ENCODE measurements at regions of chr2 and their contacts with region 1.

Region 1: DNA sequence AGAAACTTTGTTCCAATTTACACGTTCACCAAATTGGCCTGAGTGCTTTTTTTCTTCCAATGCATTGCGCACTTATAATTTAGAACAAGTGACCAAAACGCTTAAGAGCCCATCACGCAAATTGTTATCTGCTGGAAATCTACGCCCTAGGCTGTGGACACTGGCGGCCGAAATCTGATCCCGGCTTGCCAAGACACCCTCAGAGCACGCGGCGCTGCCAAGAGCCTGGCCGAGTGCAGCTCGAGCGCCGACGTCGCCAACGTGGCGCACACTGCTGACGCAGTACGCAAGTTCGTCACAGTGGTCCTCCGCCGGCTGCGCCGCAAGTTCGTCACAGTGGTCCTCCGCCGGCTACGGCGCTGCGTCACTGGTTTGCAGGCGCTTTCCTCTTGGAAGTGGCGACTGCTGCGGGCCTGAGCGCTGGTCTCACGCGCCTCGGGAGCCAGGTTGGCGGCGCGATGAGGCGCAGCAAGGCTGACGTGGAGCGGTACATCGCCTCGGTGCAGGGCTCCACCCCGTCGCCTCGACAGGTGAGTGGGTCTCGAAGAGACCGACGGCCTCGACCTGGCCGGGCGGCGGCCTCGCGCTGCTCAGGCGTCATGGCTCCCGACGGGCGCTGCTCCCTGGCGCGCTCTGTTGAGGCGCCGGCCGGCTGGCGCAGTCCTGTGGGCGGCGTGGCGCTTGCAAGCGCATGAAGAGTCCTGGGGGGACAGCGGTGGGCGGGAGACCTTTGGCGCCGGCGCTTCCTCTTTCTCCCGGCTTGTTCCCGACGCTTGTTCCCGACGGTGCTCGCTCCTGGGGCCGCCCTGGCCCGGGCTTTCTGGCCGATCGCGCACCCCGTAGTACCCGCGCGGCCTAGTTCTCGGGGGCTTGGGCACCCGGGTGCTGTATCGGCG is at the start of gene RANBP2:
- DNase-seq: peak; percentile 98
- H3K4me3 Mint-ChIP-seq: peak within 1 kb of the TSS; percentile 95
- H3K27ac Mint-ChIP-seq: peak within 1 kb of the TSS; percentile 99
- H3K4me1 Mint-ChIP-seq: peaks cover 13% of the 10 kb centered on the region
- H3K27me3 Mint-ChIP-seq: no peaks in the 10 kb centered on the region
- total RNA-seq, gene RANBP2: 74.9 and 77.0 TPM in 2 replicates

Region 2: GRCh38 chr2:108448678-108449493 is 270.5 kb before region 1 on chr2 and contains the start of gene GCC2:
- intact Hi-C with region 1: loop called (anchors 2 kb)
- DNase-seq: peak; percentile 99
- H3K4me3 Mint-ChIP-seq: peak within 1 kb of the TSS; percentile 100
- H3K27ac Mint-ChIP-seq: peak within 1 kb of the TSS; percentile 98
- H3K4me1 Mint-ChIP-seq: peaks cover 27% of the 10 kb centered on the region
- H3K27me3 Mint-ChIP-seq: no peaks in the 10 kb centered on the region
- total RNA-seq, gene GCC2: 38.1 and 43.4 TPM in 2 replicates

Region 3: GRCh38 chr2:108533832-108534583 is 185.4 kb before region 1 on chr2 and contains the start of gene LIMS1:
- intact Hi-C with region 1: loop called (anchors 1 kb)
- DNase-seq: peak; percentile 93
- H3K4me3 Mint-ChIP-seq: peak within 1 kb of the TSS; percentile 97
- H3K27ac Mint-ChIP-seq: peak within 1 kb of the TSS; percentile 98
- H3K4me1 Mint-ChIP-seq: peaks cover 40% of the 10 kb centered on the region
- H3K27me3 Mint-ChIP-seq: no peaks in the 10 kb centered on the region
- total RNA-seq, gene LIMS1: 63.1 and 66.0 TPM in 2 replicates

Region 4: GRCh38 chr2:108548208-108549003 is 171.0 kb before region 1 on chr2:
- intact Hi-C with region 1: no loop called
- DNase-seq: no peak
- H3K4me3 Mint-ChIP-seq: no peak overlapping the region
- H3K27ac Mint-ChIP-seq: no peak overlapping the region
- H3K4me1 Mint-ChIP-seq: peaks cover 6% of the 10 kb centered on the region
- H3K27me3 Mint-ChIP-seq: no peaks in the 10 kb centered on the region

Region 5: GRCh38 chr2:108594132-108594981 is 125.0 kb before region 1 on chr2:
- intact Hi-C with region 1: no loop called
- DNase-seq: peak; percentile 65
- H3K4me3 Mint-ChIP-seq: peak overlapping the region; percentile 83
- H3K27ac Mint-ChIP-seq: peak overlapping the region; percentile 92
- H3K4me1 Mint-ChIP-seq: peaks cover 52% of the 10 kb centered on the region
- H3K27me3 Mint-ChIP-seq: no peaks in the 10 kb centered on the region

Region 6: DNA sequence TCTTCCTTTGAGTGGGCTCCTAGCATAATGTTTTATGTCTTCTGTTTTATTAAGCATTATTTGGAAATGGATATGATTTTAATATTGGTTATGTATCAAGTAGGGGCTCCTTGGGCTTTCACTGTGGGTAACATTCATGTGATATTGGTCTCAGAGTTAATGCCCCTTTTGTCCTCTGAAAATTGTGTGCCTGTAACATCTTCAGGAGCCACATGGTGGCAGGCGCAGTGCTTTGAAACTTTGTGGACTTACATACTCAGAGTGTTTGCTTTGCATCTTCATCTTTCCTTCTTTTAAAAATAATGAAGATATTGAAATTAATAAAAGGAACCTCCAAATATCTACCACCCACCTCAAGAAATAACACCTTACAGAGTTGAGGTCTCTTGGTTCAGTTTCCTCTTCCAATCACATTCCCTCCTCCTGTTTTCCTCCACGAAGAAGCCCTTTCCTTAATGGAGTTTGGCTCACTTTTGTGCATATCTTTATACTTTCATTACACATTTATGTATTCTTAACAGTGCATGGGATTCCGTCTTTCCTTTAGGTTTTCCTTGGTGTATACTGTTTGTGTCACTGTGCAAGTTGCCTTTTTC is 111.6 kb before region 1 on chr2:
- intact Hi-C with region 1: loop called (anchors 5 kb)
- DNase-seq: peak; percentile 83
- H3K4me3 Mint-ChIP-seq: no peak overlapping the region
- H3K27ac Mint-ChIP-seq: no peak overlapping the region
- H3K4me1 Mint-ChIP-seq: peaks cover 65% of the 10 kb centered on the region
- H3K27me3 Mint-ChIP-seq: no peaks in the 10 kb centered on the region

Region 7: DNA sequence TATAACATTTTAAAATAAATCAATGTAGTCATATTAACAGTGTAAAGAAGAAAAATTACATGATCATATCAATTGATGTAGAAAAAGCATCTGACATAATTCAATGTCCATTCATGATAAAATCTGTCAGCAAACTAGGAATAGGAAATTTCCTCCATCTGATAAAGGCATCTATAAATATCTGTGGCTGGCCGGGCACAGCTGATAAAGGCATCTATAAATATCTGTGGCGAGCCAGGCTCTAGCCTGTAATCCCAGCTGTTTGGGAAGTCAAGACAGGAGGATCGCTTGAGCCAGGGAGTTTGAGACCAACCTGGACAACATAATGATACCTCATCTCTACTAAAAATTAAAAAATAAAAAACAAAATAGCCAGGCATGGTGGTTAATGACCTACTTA is 18.2 kb before region 1 on chr2:
- intact Hi-C with region 1: no loop called
- DNase-seq: no peak
- H3K4me3 Mint-ChIP-seq: no peak overlapping the region
- H3K27ac Mint-ChIP-seq: no peak overlapping the region
- H3K4me1 Mint-ChIP-seq: peaks cover 2% of the 10 kb centered on the region
- H3K27me3 Mint-ChIP-seq: no peaks in the 10 kb centered on the region

Region 8: DNA sequence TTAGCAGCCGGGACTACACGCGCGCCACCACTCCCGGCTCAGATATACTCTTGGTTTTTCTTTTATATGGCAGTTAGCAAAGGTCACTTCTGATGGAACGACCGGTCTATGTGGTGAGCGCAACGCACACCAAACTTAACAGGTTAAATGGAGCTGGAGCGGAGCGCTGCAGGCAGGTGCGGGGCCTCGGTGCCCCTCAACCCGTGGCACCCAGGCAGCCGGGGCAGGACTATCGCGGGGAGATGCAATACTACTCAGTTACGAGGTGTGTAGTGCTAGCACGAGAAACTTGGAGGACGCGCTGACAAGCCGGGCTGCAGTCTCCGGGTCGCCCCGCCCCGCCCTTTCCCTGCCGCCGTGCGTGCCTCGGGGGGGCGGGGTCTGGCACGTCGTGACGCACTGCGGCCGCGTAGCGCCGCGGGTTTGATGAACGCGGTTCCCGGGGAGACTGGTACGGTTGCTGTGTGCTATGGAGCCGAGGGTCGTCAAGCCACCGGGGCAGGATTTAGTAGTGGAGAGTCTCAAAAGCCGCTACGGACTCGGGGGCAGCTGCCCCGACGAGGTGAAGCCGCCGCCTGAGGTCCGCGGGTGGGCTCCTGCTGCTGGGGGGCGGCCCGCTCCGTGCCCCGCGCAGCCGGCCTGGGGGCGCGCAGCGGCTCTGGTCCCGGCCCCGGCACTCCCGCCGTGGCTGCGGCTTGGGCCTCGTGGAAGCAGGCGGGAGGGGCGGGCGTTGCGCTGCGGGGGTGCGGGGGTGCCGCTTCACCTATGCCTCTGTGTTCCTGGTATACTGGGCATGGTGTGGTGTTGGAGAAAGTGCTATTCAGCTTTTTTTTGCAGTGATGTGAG is 67.2 kb after region 1 on chr2 and contains the start of gene CCDC138:
- intact Hi-C with region 1: loop called (anchors 2 kb)
- DNase-seq: peak; percentile 98
- H3K4me3 Mint-ChIP-seq: peak within 1 kb of the TSS; percentile 96
- H3K27ac Mint-ChIP-seq: peak within 1 kb of the TSS; percentile 99
- H3K4me1 Mint-ChIP-seq: peaks cover 14% of the 10 kb centered on the region
- H3K27me3 Mint-ChIP-seq: no peaks in the 10 kb centered on the region
- total RNA-seq, gene CCDC138: 19.9 and 20.1 TPM in 2 replicates

Region 9: DNA sequence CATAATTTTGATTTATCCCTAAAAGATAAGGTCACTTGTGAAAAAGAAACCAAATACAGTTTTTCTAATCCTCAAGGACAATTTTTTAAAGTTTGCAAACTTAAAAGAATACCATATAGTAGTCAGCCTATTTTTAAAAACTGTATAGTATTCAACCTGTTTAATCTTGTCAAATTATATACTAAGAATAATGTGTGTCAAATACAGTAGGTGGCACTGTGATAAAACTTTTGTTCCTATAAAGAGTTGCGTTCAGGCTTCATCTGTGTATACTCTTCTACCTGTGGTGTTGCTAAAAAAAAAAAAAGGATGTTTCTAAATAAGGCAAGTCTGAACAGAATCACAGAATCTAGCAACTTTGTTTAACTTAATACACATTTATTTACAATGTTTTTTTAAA is 135.8 kb after region 1 on chr2:
- intact Hi-C with region 1: no loop called
- DNase-seq: no peak
- H3K4me3 Mint-ChIP-seq: no peak overlapping the region
- H3K27ac Mint-ChIP-seq: no peak overlapping the region
- H3K4me1 Mint-ChIP-seq: peaks cover 2% of the 10 kb centered on the region
- H3K27me3 Mint-ChIP-seq: no peaks in the 10 kb centered on the region

Measured in activated CD4-positive, alpha-beta T cell treated with anti-CD3 and anti-CD28 coated beads, Interleukin-2, amount 10 ng/mL, durations not matched to agents 24 days and 14 days (primary cell).